ENCODE measurements at regions of chr1 and their contacts with region 1.

Region 1: GRCh38 chr1:245480393-245481120 is 325.8 kb downstream of the KIF26B start:
- DNase-seq: no peak

Region 2: GRCh38 chr1:245434285-245434684 is 46.3 kb before region 1 on chr1:
- intact Hi-C with region 1: loop called in 1 of 2 experiments (anchors 1 kb)
- DNase-seq: no peak

Region 3: DNA sequence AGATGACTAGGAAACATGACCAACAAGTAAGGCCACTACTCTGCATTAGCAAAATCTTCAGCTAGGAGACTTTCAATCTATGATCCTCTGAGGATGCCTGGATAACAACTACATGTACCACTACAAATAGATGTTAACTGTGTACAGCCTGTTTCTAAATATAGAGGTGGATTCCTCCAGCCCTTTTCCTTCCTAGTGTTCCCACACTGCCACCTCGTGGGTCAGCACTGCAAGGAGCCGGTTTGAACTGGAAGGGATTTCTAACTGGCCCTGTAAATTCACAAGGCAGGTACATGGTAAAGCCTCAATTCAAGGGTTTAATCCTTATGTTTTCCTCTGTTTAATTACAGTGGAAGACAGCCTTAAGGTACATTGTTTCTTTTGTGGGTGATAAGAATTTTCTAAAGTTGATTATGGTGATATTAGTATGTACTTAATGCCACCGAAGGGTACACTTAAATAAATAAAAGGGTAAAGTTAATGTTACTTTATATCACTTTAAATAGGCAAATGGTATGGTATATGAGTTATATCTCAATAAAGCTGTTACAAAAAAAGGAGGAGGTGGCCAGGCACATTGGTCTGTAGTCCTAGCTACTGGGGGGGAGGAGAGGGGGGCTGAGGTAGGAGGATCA is 1012.2 kb after region 1 on chr1:
- intact Hi-C with region 1: no loop called
- DNase-seq: peak; percentile 85

Measured in posterior vena cava (tissue), 2 donors.